Lower lobe of right lung (tissue), 2 donors: ENCODE measurements at regions of chr5 and their contacts with region 1.

Region 1: DNA sequence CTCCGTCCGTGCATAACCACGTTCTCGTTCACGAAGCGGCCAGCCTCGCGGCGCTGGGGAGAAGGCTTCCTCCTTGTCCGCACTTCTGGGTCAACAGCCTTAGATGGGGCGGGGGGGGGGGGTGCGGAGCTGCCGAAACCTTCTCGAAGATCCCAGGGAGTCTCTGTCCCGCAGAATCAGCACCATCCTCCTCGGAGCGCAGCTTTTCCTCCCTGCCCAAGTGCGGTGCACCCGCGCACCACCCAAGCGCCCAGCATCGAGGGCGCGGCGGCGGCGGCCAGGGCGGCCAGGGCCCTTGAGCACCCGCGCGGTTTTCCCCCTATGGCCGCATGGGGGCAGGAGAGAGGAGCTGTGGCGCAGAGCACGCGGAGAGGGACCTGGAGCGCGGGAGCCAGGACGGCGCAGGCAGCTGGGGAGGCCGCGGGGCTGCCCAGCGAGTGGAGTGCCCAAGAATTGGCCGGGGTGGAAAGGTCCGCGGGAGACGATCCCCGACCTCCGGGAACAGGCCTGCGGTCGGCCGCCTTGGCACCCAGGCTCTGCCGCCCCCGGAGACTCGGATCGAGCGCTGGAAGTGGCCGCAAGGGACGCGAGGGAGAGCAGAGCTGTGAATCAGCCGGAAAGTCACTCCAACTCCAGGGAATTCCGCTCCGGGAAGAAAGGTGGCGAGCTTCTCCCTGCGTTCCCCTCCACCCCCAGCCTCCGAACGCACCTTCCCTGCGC is 43.1 kb downstream of the TMEM174 start:
- DNase-seq: peak; percentile 80
- ATAC-seq: peak; percentile 99
- H3K4me3 ChIP-seq: peak overlapping the region; percentile 46
- H3K27ac ChIP-seq: no peak overlapping the region
- H3K4me1 ChIP-seq: peaks cover 14% of the 10 kb centered on the region
- H3K27me3 ChIP-seq: peaks cover 78% of the 10 kb centered on the region
- CTCF ChIP-seq: peak; percentile 88

Region 2: GRCh38 chr5:73298772-73299630 is 83.0 kb after region 1 on chr5:
- intact Hi-C with region 1: loop called (anchors 10 kb)
- DNase-seq: no peak
- ATAC-seq: peak in 1 of 2 donors; percentile 33
- H3K4me3 ChIP-seq: no peak overlapping the region
- H3K27ac ChIP-seq: no peak overlapping the region
- H3K4me1 ChIP-seq: peaks cover 14% of the 10 kb centered on the region
- H3K27me3 ChIP-seq: peaks cover 90% of the 10 kb centered on the region
- CTCF ChIP-seq: peak; percentile 27